Dendritic cell treated with granulocyte-macrophage colony-stimulating factor and Interleukin-4, amounts not matched to agents 40 ng/mL and 50 ng/mL, for 4 days (primary cell): ENCODE measurements at regions of chr17 and their contacts with region 1.

Region 1: DNA sequence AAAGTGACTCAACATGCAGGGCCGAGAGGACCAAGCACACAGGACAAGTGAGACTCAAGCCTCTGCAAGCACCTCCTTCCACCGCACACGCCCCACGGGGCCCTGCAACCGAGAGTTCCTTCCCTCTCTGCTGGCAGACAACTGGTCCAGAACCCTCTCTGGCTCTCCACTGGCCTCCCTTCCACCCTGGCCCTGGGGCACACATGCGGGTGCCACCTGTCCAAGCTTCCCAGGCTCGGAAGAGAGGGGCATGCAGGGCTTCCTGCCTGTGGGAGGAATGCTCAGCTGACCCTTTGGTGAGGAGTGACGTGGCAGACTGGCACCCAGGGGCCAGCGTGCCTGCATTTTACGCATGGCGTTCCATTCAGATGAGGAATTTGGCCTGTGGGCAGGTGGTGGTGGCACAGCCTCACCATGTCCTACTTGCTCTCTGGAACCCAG is 59.8 kb downstream of the PIPOX start:
- H3K4me3 Mint-ChIP-seq: no peak overlapping the region
- H3K27ac Mint-ChIP-seq: peak overlapping the region; percentile 3
- H3K4me1 Mint-ChIP-seq: peaks cover 46% of the 10 kb centered on the region
- H3K27me3 Mint-ChIP-seq: no peaks in the 10 kb centered on the region

Region 2: GRCh38 chr17:29090750-29091603 is 11.8 kb before region 1 on chr17:
- intact Hi-C with region 1: loop called (anchors 1 kb)
- H3K4me3 Mint-ChIP-seq: no peak overlapping the region
- H3K27ac Mint-ChIP-seq: no peak overlapping the region
- H3K4me1 Mint-ChIP-seq: no peaks in the 10 kb centered on the region
- H3K27me3 Mint-ChIP-seq: no peaks in the 10 kb centered on the region

Region 3: GRCh38 chr17:29116804-29117772 is 14.3 kb after region 1 on chr17:
- intact Hi-C with region 1: no loop called
- H3K4me3 Mint-ChIP-seq: peak overlapping the region; percentile 52
- H3K27ac Mint-ChIP-seq: peak overlapping the region; percentile 61
- H3K4me1 Mint-ChIP-seq: peaks cover 56% of the 10 kb centered on the region
- H3K27me3 Mint-ChIP-seq: no peaks in the 10 kb centered on the region